H1 (cell line): ENCODE measurements at regions of chr19 and their contacts with region 1.

Region 1: DNA sequence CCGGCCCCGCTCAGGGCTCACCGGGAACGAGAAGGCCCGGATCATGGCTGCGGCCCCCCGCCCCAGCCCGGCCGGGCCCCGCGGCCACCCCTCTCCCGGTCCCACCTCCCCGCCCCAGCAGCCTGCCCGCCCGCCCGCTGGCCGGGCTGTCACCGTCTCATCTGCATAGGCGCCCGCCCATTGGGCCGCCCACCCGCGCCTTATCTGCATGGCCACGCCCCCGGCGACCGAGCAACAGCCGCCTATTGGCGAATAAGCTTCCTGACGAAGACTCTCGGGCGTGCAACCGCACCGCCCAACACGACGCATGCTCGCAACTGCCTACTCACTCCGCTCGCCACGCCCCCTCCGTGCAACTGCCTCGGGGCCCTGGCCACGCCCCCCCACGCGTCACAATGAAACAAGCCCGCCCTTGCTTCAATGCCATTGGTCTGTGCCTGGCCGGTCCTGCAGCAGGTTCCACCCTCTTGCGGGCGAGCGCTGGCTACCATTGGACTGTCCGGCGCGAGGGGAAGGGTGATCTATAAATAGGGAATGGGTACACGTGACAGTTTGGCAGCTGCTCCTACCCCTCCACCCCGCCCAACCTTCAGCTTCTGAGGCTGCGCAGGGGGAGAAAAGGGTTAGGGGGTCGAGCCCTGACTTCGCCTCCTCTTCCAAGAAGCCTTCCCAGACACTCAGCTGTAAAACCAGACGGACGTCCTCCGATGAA is at the start of gene DACT3:
- DNase-seq: peak; percentile 100
- H3K4me3 ChIP-seq: peak within 1 kb of the TSS; percentile 47 to 71 (median 54)
- H3K27ac ChIP-seq: no peak within 1 kb of the TSS
- H3K4me1 ChIP-seq: peaks cover 0 to 14% (median 9%) of the 10 kb centered on the region in 4 experiments; a peak in 6 of 7 replicates
- H3K27me3 ChIP-seq: peaks cover 0 to 17% (median 11%) of the 10 kb centered on the region in 4 experiments; a peak in 4 of 7 replicates
- CTCF ChIP-seq: no peak
- EP300 ChIP-seq: no peak
- POLR2A ChIP-seq: no peak
- RAD21 ChIP-seq: no peak
- total RNA-seq, gene DACT3: 1.5 and 2.0 TPM in 2 replicates

Region 2: GRCh38 chr19:46529622-46530462 is 131.3 kb before region 1 on chr19:
- CTCF ChIA-PET with region 1: interaction called, 15 read pairs
- POLR2A ChIA-PET with region 1: interaction called, 5 read pairs
- DNase-seq: peak in 1 of 2 experiments; percentile 86
- H3K4me3 ChIP-seq: peak overlapping the region in 3 of 4 experiments; percentile 2 to 40 (median 19); a peak in 3 of 8 replicates
- H3K27ac ChIP-seq: no peak overlapping the region
- H3K4me1 ChIP-seq: peaks cover 5 to 22% (median 12%) of the 10 kb centered on the region in 4 experiments
- H3K27me3 ChIP-seq: no peaks in the 10 kb centered on the region
- CTCF ChIP-seq: peak; percentile 77 to 92 (median 90)
- EP300 ChIP-seq: no peak; a peak in 1 of 3 replicates
- POLR2A ChIP-seq: no peak
- RAD21 ChIP-seq: peak; percentile 90 to 93

Region 3: DNA sequence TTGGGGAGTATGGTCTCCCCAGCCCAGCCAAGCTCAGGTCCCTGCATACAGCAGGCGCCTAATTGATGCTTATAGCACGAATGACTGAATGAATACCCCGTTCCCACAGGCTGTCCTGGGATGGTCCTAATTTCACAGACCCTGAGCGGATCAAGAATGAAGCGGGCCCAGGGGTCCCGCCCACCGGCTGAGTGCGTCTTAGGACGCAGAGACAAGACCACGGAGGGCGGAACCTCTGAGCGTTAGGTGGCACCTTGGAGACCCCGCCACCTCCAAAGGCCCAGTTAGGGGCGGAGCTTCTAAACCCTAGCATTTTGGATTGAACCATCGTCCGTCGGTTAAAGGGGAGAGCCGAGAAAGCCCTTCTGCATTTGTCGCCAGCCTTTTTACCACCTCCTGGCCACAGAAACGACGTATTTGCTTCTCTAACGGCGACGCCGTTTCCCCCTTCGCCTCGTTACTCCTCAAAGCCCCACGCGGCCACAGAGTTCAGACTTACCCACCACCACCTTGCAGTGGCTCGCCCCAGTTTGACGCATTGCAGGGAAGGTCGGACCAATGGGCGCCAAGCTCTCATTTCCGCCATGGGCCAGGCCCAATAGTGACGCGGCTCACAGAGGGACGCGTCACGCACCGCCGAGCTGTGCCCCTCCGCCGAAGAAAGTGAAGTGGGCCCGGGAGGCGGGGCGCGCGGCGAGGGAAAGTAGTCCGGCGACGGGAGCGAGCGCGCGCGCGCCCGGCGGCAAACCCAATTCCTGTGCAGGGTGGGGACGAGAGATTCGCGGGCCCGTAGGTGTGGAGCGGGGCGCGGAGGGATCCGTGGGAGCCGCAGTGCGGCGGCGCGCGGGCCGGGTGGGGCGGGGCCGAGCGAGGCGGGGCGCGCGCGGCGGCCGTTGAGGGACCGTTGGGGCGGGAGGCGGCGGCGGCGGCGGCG is 60.5 kb before region 1 on chr19:
- CTCF ChIA-PET with region 1: interaction called, 11 read pairs
- POLR2A ChIA-PET with region 1: interaction called, 7 read pairs
- DNase-seq: peak; percentile 88 to 100
- H3K4me3 ChIP-seq: peak overlapping the region; percentile 90 to 100 (median 94)
- H3K27ac ChIP-seq: peak overlapping the region; percentile 100
- H3K4me1 ChIP-seq: peaks cover 0 to 19% (median 9%) of the 10 kb centered on the region in 4 experiments; a peak in 5 of 7 replicates
- H3K27me3 ChIP-seq: no peaks in the 10 kb centered on the region
- CTCF ChIP-seq: no peak
- EP300 ChIP-seq: peak in 1 of 2 experiments; percentile 97; a peak in 2 of 3 replicates
- POLR2A ChIP-seq: peak in 1 of 2 experiments; percentile 78; a peak in 2 of 3 replicates
- RAD21 ChIP-seq: no peak

Region 4: GRCh38 chr19:46634045-46634655 is 27.0 kb before region 1 on chr19:
- CTCF ChIA-PET with region 1: interaction called, 56 read pairs
- POLR2A ChIA-PET with region 1: interaction called, 6 read pairs
- DNase-seq: peak; percentile 87 to 98
- H3K4me3 ChIP-seq: peak overlapping the region; percentile 47 to 97 (median 58)
- H3K27ac ChIP-seq: no peak overlapping the region
- H3K4me1 ChIP-seq: peaks cover 0 to 24% (median 15%) of the 10 kb centered on the region in 4 experiments; a peak in 6 of 7 replicates
- H3K27me3 ChIP-seq: peaks cover 5 to 50% (median 42%) of the 10 kb centered on the region in 4 experiments
- CTCF ChIP-seq: no peak
- EP300 ChIP-seq: no peak
- POLR2A ChIP-seq: no peak
- RAD21 ChIP-seq: no peak

Region 5: GRCh38 chr19:46678110-46678732 is 17.0 kb after region 1 on chr19:
- CTCF ChIA-PET with region 1: interaction called, 39 read pairs
- POLR2A ChIA-PET with region 1: interaction called, 7 read pairs
- DNase-seq: peak in 1 of 2 experiments; percentile 91
- H3K4me3 ChIP-seq: no peak overlapping the region
- H3K27ac ChIP-seq: no peak overlapping the region
- H3K4me1 ChIP-seq: peaks cover 0 to 5% (median 0%) of the 10 kb centered on the region in 4 experiments; a peak in 3 of 7 replicates
- H3K27me3 ChIP-seq: no peaks in the 10 kb centered on the region
- CTCF ChIP-seq: no peak
- EP300 ChIP-seq: no peak
- POLR2A ChIP-seq: no peak
- RAD21 ChIP-seq: no peak

Region 6: DNA sequence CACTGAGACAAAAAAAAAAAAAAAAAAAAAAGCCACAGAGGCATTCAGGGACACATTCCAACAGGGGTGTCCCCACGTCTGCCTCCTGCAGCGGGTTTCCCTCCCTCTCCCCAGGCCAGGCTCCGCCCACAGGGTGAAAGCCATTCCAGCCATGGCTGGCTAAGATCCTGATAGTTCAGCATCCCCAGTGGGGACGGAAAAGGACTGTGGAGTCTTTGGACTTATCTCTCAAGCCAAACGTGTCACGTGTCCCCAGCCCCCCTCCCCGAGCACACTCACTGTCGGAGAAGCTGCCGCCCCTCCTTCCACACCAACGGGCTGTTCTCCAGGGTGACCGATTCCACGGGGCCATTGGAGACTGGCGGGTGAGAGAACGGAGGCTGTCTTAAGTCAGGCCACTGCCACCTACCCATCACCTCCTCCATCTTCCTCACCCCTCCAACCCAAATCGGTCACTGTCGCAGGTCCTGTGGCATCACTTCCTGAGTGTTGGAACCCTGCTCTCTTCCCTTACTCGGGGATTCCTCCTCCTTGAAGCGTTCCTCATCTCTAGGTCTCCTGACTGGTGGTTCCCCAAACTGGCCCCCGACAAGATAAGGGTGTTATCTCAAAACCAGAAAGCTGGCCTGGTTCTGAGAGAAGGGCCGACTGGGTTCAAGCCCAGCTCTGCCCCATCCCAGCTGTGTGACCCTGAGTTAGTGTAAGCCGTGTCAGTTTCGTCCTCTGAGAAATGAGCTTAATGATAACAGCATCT is 75.5 kb after region 1 on chr19:
- CTCF ChIA-PET with region 1: no interaction called
- POLR2A ChIA-PET with region 1: no interaction called
- DNase-seq: no peak
- H3K4me3 ChIP-seq: no peak overlapping the region
- H3K27ac ChIP-seq: no peak overlapping the region
- H3K4me1 ChIP-seq: peaks cover 0 to 6% (median 2%) of the 10 kb centered on the region in 4 experiments; a peak in 3 of 7 replicates
- H3K27me3 ChIP-seq: no peaks in the 10 kb centered on the region
- CTCF ChIP-seq: no peak
- EP300 ChIP-seq: no peak
- POLR2A ChIP-seq: no peak
- RAD21 ChIP-seq: no peak